ENCODE measurements at regions of chr20 and their contacts with region 1.

Region 1: GRCh38 chr20:25247956-25248785 is at the start of gene PYGB:
- H3K4me3 ChIP-seq: peak within 1 kb of the TSS; percentile 87
- H3K27ac ChIP-seq: peak within 1 kb of the TSS; percentile 87
- H3K4me1 ChIP-seq: peaks cover 23% of the 10 kb centered on the region
- CTCF ChIP-seq: peak; percentile 61; the same call in 1 of the 2 replicates

Region 2: GRCh38 chr20:25223179-25223661 is 25.0 kb before region 1 on chr20:
- CTCF ChIA-PET with region 1: interaction called, 3 read pairs
- POLR2A ChIA-PET with region 1: interaction called, 14 read pairs
- H3K4me3 ChIP-seq: no peak overlapping the region
- H3K27ac ChIP-seq: no peak overlapping the region
- H3K4me1 ChIP-seq: 0 out of 2 replicates have a peak, but pooled peaks cover 3% of the 10 kb centered on the region
- CTCF ChIP-seq: peak; percentile 26; the same call in 1 of the 2 replicates

Region 3: GRCh38 chr20:25237610-25238318 is 10.4 kb before region 1 on chr20:
- CTCF ChIA-PET with region 1: interaction called, 20 read pairs
- POLR2A ChIA-PET with region 1: interaction called, 17 read pairs
- H3K4me3 ChIP-seq: no peak overlapping the region
- H3K27ac ChIP-seq: peak overlapping the region; percentile 27; the same call in 1 of the 2 replicates
- H3K4me1 ChIP-seq: peaks cover 9% of the 10 kb centered on the region
- CTCF ChIP-seq: no peak

Region 4: DNA sequence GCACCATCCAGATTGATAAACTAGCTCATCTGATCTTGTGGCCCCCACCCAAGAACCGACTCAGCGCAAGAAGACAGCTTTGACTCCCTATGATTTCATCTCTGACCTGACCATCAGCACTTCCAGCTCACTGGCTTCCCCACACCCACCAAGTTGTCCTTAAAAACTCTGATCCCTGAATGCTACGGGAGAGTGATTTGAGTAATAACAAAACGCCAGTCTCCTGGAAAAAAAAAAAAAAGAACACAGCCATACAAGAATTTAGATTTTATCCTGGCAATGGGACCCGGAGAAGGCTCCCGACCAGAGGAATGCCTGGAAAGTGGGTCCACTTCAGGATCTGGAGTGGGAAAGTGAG is 79.7 kb after region 1 on chr20:
- CTCF ChIA-PET with region 1: no interaction called
- POLR2A ChIA-PET with region 1: no interaction called
- H3K4me3 ChIP-seq: no peak overlapping the region
- H3K27ac ChIP-seq: no peak overlapping the region
- H3K4me1 ChIP-seq: no peaks in the 10 kb centered on the region
- CTCF ChIP-seq: no peak

Measured in HEK293 (cell line).